Left cardiac atrium (tissue), 4 donors: ENCODE measurements at regions of chr9 and their contacts with region 1.

Region 1: DNA sequence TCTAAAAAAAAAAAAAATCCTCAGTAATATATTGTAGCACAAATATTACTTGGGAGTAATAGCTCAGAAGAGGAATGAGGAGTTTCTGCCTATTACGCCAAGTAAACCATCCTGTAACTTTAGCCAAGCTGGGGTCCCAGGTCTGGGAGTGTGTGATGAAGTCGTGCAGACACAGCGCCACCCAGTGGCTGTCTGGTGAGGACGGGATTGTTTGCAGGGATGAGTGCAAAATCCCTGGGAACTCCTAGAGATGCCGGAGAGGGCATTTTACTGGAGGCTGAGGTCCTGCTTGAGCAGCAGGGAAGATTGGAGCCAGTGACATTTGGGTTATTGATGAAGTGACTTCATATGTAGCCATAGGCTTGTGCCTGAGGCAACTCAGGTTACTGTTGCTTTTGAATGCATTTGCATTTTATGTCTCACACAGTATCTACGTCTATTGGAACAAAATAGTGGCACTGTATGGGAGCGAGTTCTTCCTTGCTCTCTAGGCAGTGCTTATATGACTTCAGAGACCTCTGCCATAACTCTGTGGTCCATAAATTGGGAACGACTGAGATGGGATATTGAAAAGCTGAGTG is 72.8 kb downstream of the PSAT1 start:
- DNase-seq: peak; percentile 72
- ATAC-seq: peak; percentile 72 to 78

Region 2: DNA sequence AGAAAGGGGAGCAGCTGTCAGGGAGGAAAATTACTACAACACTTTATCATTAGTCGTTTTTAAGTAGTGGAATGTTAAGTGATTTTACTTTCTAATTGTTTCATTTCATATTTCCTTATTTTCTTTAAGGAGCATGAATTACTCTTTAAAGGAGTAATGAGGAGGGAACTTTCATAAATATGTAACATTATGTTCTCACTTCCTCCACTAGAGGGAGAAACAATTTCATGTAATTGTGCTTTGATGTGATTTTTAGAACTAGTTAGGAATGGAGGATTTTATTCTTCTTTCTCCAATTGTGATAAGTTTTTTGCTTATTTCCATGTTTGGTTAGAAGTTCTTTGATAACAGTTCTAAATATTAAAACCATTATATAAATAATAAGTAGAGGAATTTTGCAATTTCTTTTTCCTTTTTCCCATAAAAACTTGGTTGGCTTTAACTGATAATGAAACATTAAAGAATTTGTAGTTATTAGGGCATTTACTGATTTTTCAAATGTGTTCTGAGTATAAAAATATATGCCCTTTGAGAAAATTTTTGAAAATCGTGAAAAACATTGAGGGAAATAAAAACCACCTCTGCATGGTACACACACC is 108.2 kb before region 1 on chr9:
- intact Hi-C with region 1: loop called (anchors 5 to 10 kb)
- DNase-seq: no peak
- ATAC-seq: no peak

Region 3: GRCh38 chr9:78424299-78424698 is 54.6 kb after region 1 on chr9:
- intact Hi-C with region 1: no loop called
- DNase-seq: no peak
- ATAC-seq: no peak